ENCODE measurements at regions of chr1 and their contacts with region 1.

Region 1: GRCh38 chr1:154352581-154353459 is 27.5 kb downstream of the ATP8B2 start:
- DNase-seq: peak; percentile 69
- ATAC-seq: peak; percentile 78
- H3K4me3 Mint-ChIP-seq: peak overlapping the region; percentile 69
- H3K27ac Mint-ChIP-seq: peak overlapping the region; percentile 64
- H3K4me1 Mint-ChIP-seq: peaks cover 35% of the 10 kb centered on the region
- H3K27me3 Mint-ChIP-seq: no peaks in the 10 kb centered on the region
- CTCF ChIP-seq: no peak

Region 2: DNA sequence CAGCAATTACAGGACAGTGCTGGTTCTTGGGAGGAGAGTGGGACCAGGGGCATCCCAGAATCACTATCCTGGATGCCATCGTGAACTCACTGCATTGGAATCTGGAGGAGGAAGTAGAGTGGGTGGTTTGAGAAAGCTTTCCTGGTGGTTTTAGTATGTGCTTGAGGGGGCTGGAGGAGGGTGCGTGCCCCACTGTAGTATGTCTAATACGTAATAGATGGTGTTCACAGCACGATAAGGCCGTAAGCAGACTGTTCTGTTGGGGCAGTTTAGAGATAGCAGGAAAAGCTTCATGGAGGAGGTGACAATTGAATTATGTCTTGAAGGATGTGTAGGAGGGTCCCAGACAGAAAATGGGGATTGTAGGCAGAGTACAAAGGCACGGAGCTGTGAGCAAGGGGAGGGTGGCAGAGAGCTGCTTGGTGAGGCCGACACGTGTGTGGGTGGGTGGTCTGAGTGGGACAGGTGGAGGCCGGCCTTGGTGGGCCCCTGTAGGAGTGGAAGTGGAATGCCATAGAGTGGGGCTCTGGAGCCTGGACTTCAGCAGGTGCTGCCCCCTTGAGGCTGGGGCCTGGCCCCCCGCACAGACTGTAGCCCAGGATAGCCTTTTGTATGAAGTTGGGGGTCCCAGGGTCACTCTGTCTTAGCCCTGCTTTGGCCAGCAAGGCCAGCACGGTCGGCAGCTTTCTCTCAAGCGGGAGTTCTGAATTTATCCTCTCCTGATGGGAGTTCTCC is 89.4 kb after region 1 on chr1:
- CTCF ChIA-PET with region 1: interaction called, 4 read pairs
- POLR2A ChIA-PET with region 1: no interaction called
- intact Hi-C with region 1: loop called (anchors 10 kb)
- DNase-seq: no peak
- ATAC-seq: no peak
- H3K4me3 Mint-ChIP-seq: no peak overlapping the region
- H3K27ac Mint-ChIP-seq: peak overlapping the region; percentile 51
- H3K4me1 Mint-ChIP-seq: peaks cover 68% of the 10 kb centered on the region
- H3K27me3 Mint-ChIP-seq: no peaks in the 10 kb centered on the region
- CTCF ChIP-seq: peak; percentile 37